Ovary (tissue), 10 donors: ENCODE measurements at regions of chr1 and their contacts with region 1.

Region 1: GRCh38 chr1:240691521-240692338 is 79.8 kb upstream of the GREM2 start:
- DNase-seq: peak; percentile 18 to 61 (median 44)
- H3K4me3 ChIP-seq: no peak overlapping the region
- H3K27ac ChIP-seq: no peak overlapping the region
- H3K4me1 ChIP-seq: no peaks in the 10 kb centered on the region
- H3K27me3 ChIP-seq: no peaks in the 10 kb centered on the region
- CTCF ChIP-seq: peak in 2 of 3 donors; percentile 21 to 68
- EP300 ChIP-seq: no peak
- POLR2A ChIP-seq: no peak

Region 2: GRCh38 chr1:240189386-240189989 is 502.2 kb before region 1 on chr1:
- intact Hi-C with region 1: loop called in 2 of 4 experiments (anchors 5 kb)
- DNase-seq: no peak
- H3K4me3 ChIP-seq: no peak overlapping the region
- H3K27ac ChIP-seq: no peak overlapping the region
- H3K4me1 ChIP-seq: no peaks in the 10 kb centered on the region
- H3K27me3 ChIP-seq: no peaks in the 10 kb centered on the region
- CTCF ChIP-seq: peak in 2 of 3 donors; percentile 38 to 60
- EP300 ChIP-seq: no peak
- POLR2A ChIP-seq: no peak

Region 3: GRCh38 chr1:240611619-240612480 is 79.9 kb before region 1 on chr1 and contains the start of gene GREM2:
- intact Hi-C with region 1: no loop called
- DNase-seq: peak; percentile 44 to 79 (median 65)
- H3K4me3 ChIP-seq: peak within 1 kb of the TSS; percentile 44
- H3K27ac ChIP-seq: no peak within 1 kb of the TSS
- H3K4me1 ChIP-seq: no peaks in the 10 kb centered on the region
- H3K27me3 ChIP-seq: no peaks in the 10 kb centered on the region
- CTCF ChIP-seq: no peak
- EP300 ChIP-seq: no peak
- POLR2A ChIP-seq: no peak
- total RNA-seq, gene GREM2: 0.95 to 16.7 (median 5.4) TPM